Motor neuron (in vitro differentiated cells): ENCODE measurements at regions of chr11 and their contacts with region 1.

Region 1: DNA sequence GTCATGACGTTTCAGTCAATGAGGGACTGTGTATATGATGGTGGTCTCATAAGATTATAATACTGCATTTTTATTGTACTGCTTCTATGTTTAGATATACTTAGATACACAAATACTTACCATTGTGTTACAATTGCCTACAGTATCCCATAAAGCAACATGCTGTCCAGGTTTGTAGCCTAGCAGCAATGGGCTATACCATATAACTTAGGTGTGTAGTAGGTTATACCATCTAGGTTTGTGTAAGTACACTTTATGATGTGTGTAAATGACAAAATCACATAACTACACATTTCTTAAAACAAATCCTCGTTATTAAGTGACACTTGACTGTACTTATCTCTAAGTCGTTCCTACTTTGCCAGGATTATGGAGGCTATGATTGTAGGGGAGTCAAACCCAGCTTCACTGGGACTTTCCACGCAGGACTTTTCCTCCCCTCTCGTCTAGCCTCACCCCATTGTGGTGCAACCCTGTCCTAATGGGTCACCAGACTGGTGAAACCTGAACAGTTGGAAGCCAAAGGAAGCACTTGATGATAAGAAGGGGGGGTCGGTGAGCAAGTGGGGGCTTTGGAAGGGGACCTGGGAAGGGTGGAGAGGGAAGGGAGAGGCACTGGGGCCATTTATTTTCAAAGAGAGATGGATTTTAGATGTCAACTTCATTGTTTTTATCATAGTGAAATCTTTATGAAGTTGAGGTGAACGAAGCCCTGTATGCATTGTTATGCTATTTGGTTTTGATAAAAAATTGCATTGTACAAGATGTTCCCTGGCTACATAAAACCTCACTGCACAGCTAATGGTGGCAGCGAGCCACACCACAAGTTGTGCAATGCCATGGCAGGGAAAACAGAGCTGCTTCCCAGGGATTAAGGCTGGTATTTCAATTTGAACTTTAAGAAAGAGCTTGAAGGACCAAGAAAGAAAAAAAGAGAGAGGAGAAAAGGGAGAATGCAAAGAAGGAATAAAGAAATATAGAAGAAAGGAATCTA is 129.1 kb downstream of the EHF start:
- ATAC-seq: peak in 3 of 8 experiments; percentile 34 to 64 (median 38)
- H3K4me3 ChIP-seq: no peak overlapping the region
- H3K27ac ChIP-seq: no peak overlapping the region
- H3K4me1 ChIP-seq: no peaks in the 10 kb centered on the region

Region 2: DNA sequence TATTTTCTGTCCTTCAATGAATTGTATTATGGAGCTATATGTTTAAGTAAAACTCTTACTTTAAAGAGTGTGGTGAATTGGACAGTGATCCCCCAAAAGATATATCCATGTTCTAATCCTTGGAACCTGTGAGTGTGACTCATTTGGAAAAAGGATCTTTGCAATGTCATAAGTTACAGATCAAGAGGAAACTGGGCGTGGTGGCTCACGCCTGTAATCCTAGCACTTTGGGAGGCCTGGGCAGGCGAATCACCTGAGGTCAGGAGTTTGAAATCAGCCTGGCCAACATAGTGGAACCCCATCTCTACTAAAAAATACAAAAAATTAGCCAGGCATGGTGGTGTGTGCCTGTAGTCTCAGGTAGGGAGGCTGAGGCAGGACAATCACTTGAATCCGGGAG is 273.1 kb before region 1 on chr11:
- in situ Hi-C with region 1: no loop called
- ATAC-seq: no peak
- H3K4me3 ChIP-seq: no peak overlapping the region
- H3K27ac ChIP-seq: no peak overlapping the region
- H3K4me1 ChIP-seq: peaks cover 0 to 8% of the 10 kb centered on the region in 2 donors

Region 3: GRCh38 chr11:34869426-34869825 is 119.5 kb after region 1 on chr11:
- in situ Hi-C with region 1: loop called in 1 of 9 experiments (anchors 25 kb)
- ATAC-seq: no peak
- H3K4me3 ChIP-seq: no peak overlapping the region
- H3K27ac ChIP-seq: no peak overlapping the region
- H3K4me1 ChIP-seq: peaks cover 2 to 10% of the 10 kb centered on the region in 2 donors

Region 4: GRCh38 chr11:34926101-34926830 is 176.3 kb after region 1 on chr11:
- in situ Hi-C with region 1: no loop called
- ATAC-seq: peak in 7 of 8 experiments; percentile 43 to 76 (median 53)
- H3K4me3 ChIP-seq: no peak overlapping the region
- H3K27ac ChIP-seq: no peak overlapping the region
- H3K4me1 ChIP-seq: peaks cover 3 to 10% of the 10 kb centered on the region in 2 donors